Mammary epithelial cell (primary cell): ENCODE measurements at regions of chr13 and their contacts with region 1.

Region 1: GRCh38 chr13:106393781-106394180 is 141.7 kb downstream of the EFNB2 start:
- DNase-seq: peak; percentile 94
- H3K4me3 ChIP-seq: no peak overlapping the region
- H3K27ac ChIP-seq: no peak overlapping the region
- H3K4me1 ChIP-seq: peaks cover 24% of the 10 kb centered on the region
- H3K27me3 ChIP-seq: no peaks in the 10 kb centered on the region
- CTCF ChIP-seq: no peak

Region 2: DNA sequence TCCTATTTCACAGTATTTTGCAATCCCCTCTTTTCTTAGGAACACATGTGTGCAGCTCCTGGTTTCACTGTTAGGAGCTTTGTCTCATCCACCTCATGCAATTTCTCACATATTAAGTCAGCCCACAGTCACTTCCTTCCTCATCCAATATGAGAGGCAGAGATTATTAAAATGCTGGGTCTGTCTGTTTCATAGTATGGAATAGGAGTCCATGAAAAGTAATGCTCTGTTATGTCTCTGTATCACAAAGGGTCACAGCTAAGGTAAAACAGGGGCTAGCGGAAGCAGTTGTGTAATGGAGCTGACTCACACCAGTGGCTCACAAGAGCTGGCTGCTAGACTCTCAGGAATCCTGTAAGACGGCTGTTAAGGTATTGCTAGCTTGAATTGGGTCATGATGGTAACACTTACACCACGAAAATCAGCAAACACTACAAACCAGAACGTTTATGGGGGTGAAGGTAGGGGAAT is 74.8 kb before region 1 on chr13:
- CTCF ChIA-PET with region 1: no interaction called
- dilution Hi-C with region 1: loop called (anchors 5 kb)
- in situ Hi-C with region 1: no loop called
- intact Hi-C with region 1: no loop called
- DNase-seq: peak; percentile 94
- H3K4me3 ChIP-seq: no peak overlapping the region
- H3K27ac ChIP-seq: peak overlapping the region; percentile 68
- H3K4me1 ChIP-seq: peaks cover 19% of the 10 kb centered on the region
- H3K27me3 ChIP-seq: no peaks in the 10 kb centered on the region
- CTCF ChIP-seq: no peak

Region 3: DNA sequence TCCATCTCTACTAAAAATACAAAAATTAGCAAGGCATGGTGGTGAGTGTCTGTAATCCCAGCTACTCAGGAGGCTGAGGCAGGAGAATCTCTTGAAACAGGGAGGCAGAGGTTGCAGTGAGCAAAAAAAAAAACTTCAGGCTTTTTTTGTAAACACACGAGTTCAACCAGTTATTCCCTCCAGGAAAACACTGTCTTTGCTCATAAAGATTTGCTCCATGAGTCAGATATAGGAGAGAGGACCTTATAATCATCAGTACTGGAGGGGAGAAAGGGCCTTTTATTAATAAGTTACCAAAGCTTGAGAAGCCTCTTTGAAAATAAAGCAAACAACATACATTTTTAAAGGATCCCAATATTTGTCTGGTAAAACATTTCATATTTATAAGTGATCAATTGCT is 31.0 kb after region 1 on chr13:
- CTCF ChIA-PET with region 1: no interaction called
- dilution Hi-C with region 1: loop called (anchors 5 kb)
- in situ Hi-C with region 1: no loop called
- intact Hi-C with region 1: no loop called
- DNase-seq: no peak
- H3K4me3 ChIP-seq: no peak overlapping the region
- H3K27ac ChIP-seq: no peak overlapping the region
- H3K4me1 ChIP-seq: no peaks in the 10 kb centered on the region
- H3K27me3 ChIP-seq: no peaks in the 10 kb centered on the region
- CTCF ChIP-seq: no peak